K562 (cell line): ENCODE measurements at regions of chr6 and their contacts with region 1.

Region 1: GRCh38 chr6:145214570-145214969 is 520.8 kb downstream of the EPM2A start:
- DNase-seq: peak in 2 of 4 experiments; percentile 13 to 33
- ATAC-seq: no peak
- H3K4me3 ChIP-seq: no peak overlapping the region
- H3K27ac ChIP-seq: no peak overlapping the region
- H3K4me1 ChIP-seq: no peaks in the 10 kb centered on the region
- H3K27me3 ChIP-seq: no peaks in the 10 kb centered on the region
- CTCF ChIP-seq: peak in 1 of 3 experiments; percentile 58; a peak in 3 of 6 replicates
- EP300 ChIP-seq: no peak
- POLR2A ChIP-seq: no peak
- RAD21 ChIP-seq: peak; percentile 54 to 62

Region 2: DNA sequence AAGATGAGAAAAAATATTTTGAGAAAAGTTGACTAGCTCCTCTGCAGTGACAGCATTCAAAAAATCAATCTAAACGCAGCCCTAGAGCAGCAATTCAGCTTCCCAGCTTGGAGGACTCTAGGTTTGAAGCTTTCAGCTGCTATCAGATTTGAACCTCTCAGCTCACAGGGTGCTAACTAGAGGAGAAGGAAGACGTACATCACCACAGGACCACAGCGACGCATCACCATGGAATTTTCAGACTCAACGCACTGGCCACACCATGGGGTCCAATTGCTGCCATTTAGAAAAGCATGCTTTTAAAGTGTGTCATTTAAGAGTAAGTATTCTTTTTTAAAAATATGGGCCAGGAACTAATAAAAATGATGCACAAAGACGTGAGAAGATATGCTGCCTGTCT is 1658.0 kb before region 1 on chr6:
- CTCF ChIA-PET with region 1: no interaction called
- POLR2A ChIA-PET with region 1: no interaction called
- in situ Hi-C with region 1: loop called (anchors 25 kb)
- intact Hi-C with region 1: no loop called
- DNase-seq: no peak
- ATAC-seq: no peak; the same call in 2 of the 3 replicates
- H3K4me3 ChIP-seq: no peak overlapping the region
- H3K27ac ChIP-seq: no peak overlapping the region
- H3K4me1 ChIP-seq: peaks cover 3 to 14% of the 10 kb centered on the region in 2 experiments; a peak in 3 of 5 replicates
- H3K27me3 ChIP-seq: no peaks in the 10 kb centered on the region
- CTCF ChIP-seq: no peak
- EP300 ChIP-seq: no peak
- POLR2A ChIP-seq: no peak
- RAD21 ChIP-seq: no peak

Region 3: GRCh38 chr6:143575440-143575839 is 1639.1 kb before region 1 on chr6:
- CTCF ChIA-PET with region 1: no interaction called
- POLR2A ChIA-PET with region 1: no interaction called
- in situ Hi-C with region 1: loop called (anchors 25 kb)
- intact Hi-C with region 1: loop called (anchors 5 kb)
- DNase-seq: peak; percentile 79 to 85 (median 84)
- ATAC-seq: peak; percentile 95
- H3K4me3 ChIP-seq: no peak overlapping the region
- H3K27ac ChIP-seq: no peak overlapping the region
- H3K4me1 ChIP-seq: no peaks in the 10 kb centered on the region
- H3K27me3 ChIP-seq: peaks cover 0 to 3% of the 10 kb centered on the region in 2 experiments; a peak in 1 of 5 replicates
- CTCF ChIP-seq: peak; percentile 86 to 97 (median 94)
- EP300 ChIP-seq: no peak
- POLR2A ChIP-seq: no peak
- RAD21 ChIP-seq: peak; percentile 99

Region 4: GRCh38 chr6:145199961-145200360 is 14.6 kb before region 1 on chr6:
- CTCF ChIA-PET with region 1: no interaction called
- POLR2A ChIA-PET with region 1: no interaction called
- in situ Hi-C with region 1: no loop called
- intact Hi-C with region 1: no loop called
- DNase-seq: no peak
- ATAC-seq: no peak
- H3K4me3 ChIP-seq: no peak overlapping the region
- H3K27ac ChIP-seq: no peak overlapping the region
- H3K4me1 ChIP-seq: no peaks in the 10 kb centered on the region
- H3K27me3 ChIP-seq: no peaks in the 10 kb centered on the region
- CTCF ChIP-seq: no peak
- EP300 ChIP-seq: no peak
- POLR2A ChIP-seq: no peak
- RAD21 ChIP-seq: no peak

Region 5: GRCh38 chr6:145633981-145634627 is 419.5 kb after region 1 on chr6:
- CTCF ChIA-PET with region 1: no interaction called
- POLR2A ChIA-PET with region 1: interaction called, 3 read pairs
- in situ Hi-C with region 1: no loop called
- intact Hi-C with region 1: loop called (anchors 2 kb)
- DNase-seq: peak; percentile 76 to 88 (median 82)
- ATAC-seq: peak; percentile 99
- H3K4me3 ChIP-seq: no peak overlapping the region
- H3K27ac ChIP-seq: no peak overlapping the region
- H3K4me1 ChIP-seq: no peaks in the 10 kb centered on the region
- H3K27me3 ChIP-seq: no peaks in the 10 kb centered on the region; a peak in 1 of 5 replicates
- CTCF ChIP-seq: peak; percentile 83 to 90 (median 85)
- EP300 ChIP-seq: no peak
- POLR2A ChIP-seq: no peak
- RAD21 ChIP-seq: peak; percentile 61 to 81